ENCODE measurements at regions of chr6 and their contacts with region 1.

Region 1: DNA sequence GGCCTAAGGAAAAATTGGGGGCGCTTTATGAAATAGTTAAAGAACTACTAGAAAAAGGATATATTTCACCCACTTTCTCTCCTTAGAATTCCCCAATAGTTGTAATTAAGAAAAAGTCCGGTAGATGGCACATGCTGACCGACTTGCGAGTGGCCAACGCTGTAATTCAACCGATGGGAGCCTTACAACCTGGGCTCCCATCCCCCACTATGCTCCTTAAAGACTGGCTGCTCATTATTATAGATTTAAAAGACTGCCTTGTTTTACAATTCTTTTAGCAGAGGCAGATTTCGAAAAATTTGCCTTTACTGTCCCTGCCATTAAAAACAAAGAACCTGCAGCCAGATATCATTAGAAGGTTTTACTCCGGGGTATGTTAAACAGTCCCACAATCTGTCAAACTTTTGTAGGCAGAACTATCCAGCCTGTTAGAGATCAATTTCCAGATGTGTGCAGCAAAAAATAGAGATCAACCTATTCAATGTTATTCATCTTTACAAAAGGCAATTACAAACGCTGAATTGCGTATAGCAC is 58.5 kb upstream of the PRSS16 start:
- DNase-seq: peak; percentile 47
- ATAC-seq: peak; percentile 80
- H3K4me3 Mint-ChIP-seq: peak overlapping the region; percentile 95
- H3K27ac Mint-ChIP-seq: peak overlapping the region; percentile 97
- H3K4me1 Mint-ChIP-seq: peaks cover 20% of the 10 kb centered on the region
- H3K27me3 Mint-ChIP-seq: peaks cover 32% of the 10 kb centered on the region
- CTCF ChIP-seq: peak; percentile 57; the same call in 1 of the 2 replicates

Region 2: DNA sequence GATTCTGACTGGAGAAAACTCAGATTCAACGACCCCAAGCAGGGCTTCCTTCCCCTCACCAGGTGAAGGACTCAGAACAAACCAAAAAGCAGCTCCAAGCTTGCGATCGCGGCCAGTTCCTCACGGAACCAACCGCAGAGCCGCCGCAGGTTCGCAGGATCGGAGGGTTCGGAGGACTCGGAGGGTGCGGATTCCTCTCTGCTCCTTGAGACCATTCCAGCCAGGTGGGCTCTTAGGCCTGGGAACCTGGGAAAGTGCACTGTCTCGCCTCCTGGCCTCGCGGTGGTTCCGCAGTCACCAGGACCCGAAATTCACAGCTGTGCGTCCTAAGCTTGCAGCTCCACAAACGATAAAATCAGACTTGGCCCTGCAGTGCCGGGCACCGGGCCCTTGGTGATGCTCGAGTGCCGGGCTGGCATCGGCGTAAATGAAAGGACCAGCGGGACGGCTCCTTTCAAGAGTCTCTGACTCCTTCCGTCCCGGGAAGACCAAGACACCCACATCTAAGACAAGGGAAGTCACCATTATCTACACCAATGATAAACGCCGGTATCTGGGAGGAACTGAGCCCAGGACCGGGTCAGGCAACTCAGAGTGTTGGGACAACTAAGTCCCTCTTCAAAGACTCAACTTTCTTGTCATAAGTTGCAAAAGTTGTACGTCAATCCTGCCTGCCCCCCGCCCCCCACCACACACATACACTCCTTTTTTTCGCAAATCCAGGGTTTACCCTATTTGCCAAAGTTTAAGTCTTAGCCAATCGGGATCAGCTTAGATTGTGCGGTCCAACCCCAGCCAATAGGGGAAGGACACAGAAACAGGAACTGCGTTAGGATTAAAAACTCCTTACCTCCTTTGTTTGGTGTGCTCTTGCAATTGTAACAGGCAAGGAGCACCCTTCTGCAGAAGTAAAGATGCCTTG is 11.2 kb before region 1 on chr6:
- CTCF ChIA-PET with region 1: interaction called, 6 read pairs
- POLR2A ChIA-PET with region 1: interaction called, 18 read pairs
- DNase-seq: peak; percentile 81
- ATAC-seq: peak; percentile 72
- H3K4me3 Mint-ChIP-seq: peak overlapping the region; percentile 98
- H3K27ac Mint-ChIP-seq: peak overlapping the region; percentile 97
- H3K4me1 Mint-ChIP-seq: peaks cover 23% of the 10 kb centered on the region
- H3K27me3 Mint-ChIP-seq: peaks cover 3% of the 10 kb centered on the region; the same call in 1 of the 2 replicates
- CTCF ChIP-seq: no peak

Region 3: DNA sequence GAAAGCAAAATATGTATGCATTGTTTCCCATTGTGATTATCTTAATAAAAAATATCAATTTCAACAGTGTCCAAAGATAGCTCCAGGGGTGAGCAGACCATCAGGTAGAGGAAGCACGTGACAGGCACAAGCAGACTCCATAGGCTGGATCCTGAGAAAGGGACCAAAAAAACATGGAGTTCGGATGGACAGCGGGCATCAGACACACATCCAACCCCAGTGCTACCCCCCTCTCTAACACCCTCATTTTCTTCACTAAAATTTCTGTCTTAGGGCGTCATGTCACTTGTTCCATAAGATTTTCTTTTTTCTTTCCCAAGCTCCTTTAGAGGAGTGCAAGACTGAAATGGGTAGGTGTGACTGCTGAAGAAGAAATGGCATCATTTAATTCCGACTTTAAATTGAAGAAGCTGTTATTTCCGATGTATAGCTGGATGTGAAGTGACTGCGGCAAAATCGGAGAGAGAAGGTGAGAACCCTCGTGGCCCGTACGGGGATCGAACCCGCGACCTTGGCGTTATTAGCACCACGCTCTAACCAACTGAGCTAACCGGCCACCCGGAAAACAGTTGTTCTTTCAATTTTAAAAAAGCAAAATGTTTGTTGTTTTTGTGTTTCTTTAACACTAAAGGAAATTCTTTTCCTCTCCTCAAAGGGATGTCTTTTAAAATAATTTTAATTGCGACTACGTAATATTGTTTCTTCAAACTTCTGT is 48.3 kb after region 1 on chr6:
- CTCF ChIA-PET with region 1: interaction called, 10 read pairs
- POLR2A ChIA-PET with region 1: no interaction called
- DNase-seq: peak; percentile 80
- ATAC-seq: peak; percentile 91
- H3K4me3 Mint-ChIP-seq: peak overlapping the region; percentile 85
- H3K27ac Mint-ChIP-seq: no peak overlapping the region; the same call in 1 of the 2 replicates
- H3K4me1 Mint-ChIP-seq: peaks cover 21% of the 10 kb centered on the region
- H3K27me3 Mint-ChIP-seq: peaks cover 27% of the 10 kb centered on the region
- CTCF ChIP-seq: no peak

Region 4: DNA sequence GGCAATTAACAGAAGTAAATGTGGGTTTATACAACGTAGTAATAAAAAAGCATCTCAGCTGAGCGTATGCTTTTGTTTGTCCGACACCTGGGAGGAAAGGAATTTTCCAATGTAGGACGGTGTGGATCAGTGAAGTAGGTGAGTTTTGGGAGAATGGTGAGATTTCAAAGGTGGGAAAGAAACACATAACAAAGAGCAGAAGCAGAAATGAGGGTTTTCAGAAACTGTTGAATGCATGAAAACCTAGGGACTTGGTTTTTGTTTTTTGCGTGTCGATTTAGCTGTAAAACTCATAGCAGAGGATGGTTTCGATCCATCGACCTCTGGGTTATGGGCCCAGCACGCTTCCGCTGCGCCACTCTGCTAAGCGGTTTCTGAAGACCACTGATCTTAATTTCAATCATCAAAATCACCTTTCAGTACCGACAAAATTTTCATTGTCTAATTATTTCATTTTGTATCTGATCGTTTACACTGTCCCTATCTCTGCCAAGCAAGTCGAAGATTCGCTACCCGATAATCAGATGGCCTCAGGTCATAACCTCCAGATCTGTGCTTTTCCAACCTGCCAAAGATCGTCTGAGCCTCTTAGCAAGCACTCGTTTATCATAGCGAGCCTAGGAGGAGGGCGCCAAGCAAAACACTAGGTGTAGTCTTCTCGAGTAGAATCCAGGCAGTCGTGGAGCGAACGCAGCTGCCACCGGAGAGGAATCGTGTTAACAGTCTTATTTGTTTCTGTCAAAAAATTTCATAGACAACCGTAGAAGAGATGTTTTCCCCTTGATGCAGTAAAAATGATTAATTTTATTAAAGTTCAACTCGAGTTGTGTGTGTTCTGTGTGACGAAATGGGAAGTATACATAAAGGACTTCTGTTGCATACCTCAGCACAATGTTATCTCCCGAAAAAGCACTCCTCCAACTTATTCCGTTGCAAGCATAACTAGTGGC is 144.0 kb after region 1 on chr6:
- CTCF ChIA-PET with region 1: no interaction called
- POLR2A ChIA-PET with region 1: no interaction called
- DNase-seq: peak; percentile 55
- ATAC-seq: peak; percentile 81
- H3K4me3 Mint-ChIP-seq: peak overlapping the region; percentile 92
- H3K27ac Mint-ChIP-seq: peak overlapping the region; percentile 54
- H3K4me1 Mint-ChIP-seq: peaks cover 15% of the 10 kb centered on the region
- H3K27me3 Mint-ChIP-seq: no peaks in the 10 kb centered on the region; the same call in 1 of the 2 replicates
- CTCF ChIP-seq: no peak